ENCODE measurements at regions of chr11 and their contacts with region 1.

Region 1: DNA sequence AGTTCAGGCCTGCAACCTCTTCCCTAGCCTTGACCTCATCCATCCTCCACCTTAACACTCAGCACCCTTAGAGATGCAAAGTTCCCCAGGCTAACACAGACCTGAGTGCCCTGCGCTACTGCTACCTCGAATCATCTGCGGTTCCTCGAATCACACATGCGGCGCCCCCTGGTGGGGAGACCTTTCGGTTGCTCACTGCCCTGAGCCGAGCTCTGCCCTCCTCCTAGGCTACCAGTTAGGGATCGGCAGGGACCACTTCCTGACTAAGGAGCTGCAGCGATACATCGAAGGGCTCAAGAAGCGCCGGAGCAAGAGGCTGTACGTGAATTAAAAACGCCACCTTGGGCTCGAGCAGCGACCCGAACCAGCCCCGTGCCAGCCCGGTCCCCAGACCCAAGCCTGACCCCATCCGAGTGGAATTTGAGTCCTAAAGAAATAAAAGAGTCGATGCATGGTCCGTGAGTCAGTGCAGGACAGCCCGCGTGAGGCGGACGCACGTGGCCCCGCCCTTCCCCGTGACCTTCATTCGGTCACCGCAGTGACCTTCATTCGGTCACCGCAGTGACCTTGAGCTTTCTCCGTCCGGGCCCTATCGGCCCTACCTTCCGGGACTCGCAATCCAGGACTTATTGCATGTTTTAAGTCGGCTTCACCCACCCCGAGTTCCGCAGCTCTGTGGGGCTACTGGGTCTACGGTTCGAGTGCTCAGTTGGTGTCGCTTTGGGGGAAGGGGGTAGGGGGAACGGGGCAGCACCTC is 830 bp upstream of the ESRRA start:
- DNase-seq: peak; percentile 81
- H3K4me3 ChIP-seq: peak overlapping the region; percentile 32 to 63 (median 45)
- H3K27ac ChIP-seq: peak overlapping the region; percentile 46
- H3K4me1 ChIP-seq: peaks cover 34% of the 10 kb centered on the region
- H3K27me3 ChIP-seq: peaks cover 4% of the 10 kb centered on the region
- CTCF ChIP-seq: peak; percentile 79 to 88

Region 2: GRCh38 chr11:63838678-63839507 is 465.6 kb before region 1 on chr11 and contains the start of gene MARK2:
- CTCF ChIA-PET with region 1: interaction called, 5 read pairs
- dilution Hi-C with region 1: no loop called
- in situ Hi-C with region 1: no loop called
- intact Hi-C with region 1: loop called (anchors 10 kb)
- DNase-seq: peak; percentile 96
- H3K4me3 ChIP-seq: peak within 1 kb of the TSS; percentile 59 to 86 (median 86)
- H3K27ac ChIP-seq: peak within 1 kb of the TSS; percentile 58
- H3K4me1 ChIP-seq: peaks cover 31% of the 10 kb centered on the region
- H3K27me3 ChIP-seq: no peaks in the 10 kb centered on the region
- CTCF ChIP-seq: no peak
- total RNA-seq, gene MARK2: 26.7 to 64.4 TPM

Region 3: GRCh38 chr11:64036087-64037026 is 268.1 kb before region 1 on chr11:
- CTCF ChIA-PET with region 1: interaction called, 10 read pairs
- dilution Hi-C with region 1: no loop called
- in situ Hi-C with region 1: no loop called
- intact Hi-C with region 1: no loop called
- DNase-seq: peak; percentile 16
- H3K4me3 ChIP-seq: peak overlapping the region in 1 of 3 experiments; percentile 28
- H3K27ac ChIP-seq: no peak overlapping the region
- H3K4me1 ChIP-seq: peaks cover 4% of the 10 kb centered on the region
- H3K27me3 ChIP-seq: peaks cover 33% of the 10 kb centered on the region
- CTCF ChIP-seq: no peak

Region 4: GRCh38 chr11:64204464-64204989 is 100.0 kb before region 1 on chr11:
- CTCF ChIA-PET with region 1: interaction called, 9 read pairs
- dilution Hi-C with region 1: no loop called
- in situ Hi-C with region 1: loop called in 1 of 2 experiments (anchors 5 kb)
- intact Hi-C with region 1: loop called (anchors 1 kb)
- DNase-seq: peak; percentile 81
- H3K4me3 ChIP-seq: no peak overlapping the region
- H3K27ac ChIP-seq: no peak overlapping the region
- H3K4me1 ChIP-seq: peaks cover 5% of the 10 kb centered on the region
- H3K27me3 ChIP-seq: no peaks in the 10 kb centered on the region
- CTCF ChIP-seq: peak; percentile 80 to 91

Region 5: GRCh38 chr11:64246871-64247728 is 57.4 kb before region 1 on chr11 and contains the start of gene PPP1R14B:
- CTCF ChIA-PET with region 1: interaction called, 6 read pairs
- dilution Hi-C with region 1: no loop called
- in situ Hi-C with region 1: no loop called
- intact Hi-C with region 1: loop called (anchors 1 kb)
- DNase-seq: peak; percentile 81
- H3K4me3 ChIP-seq: peak within 1 kb of the TSS; percentile 79 to 84 (median 82)
- H3K27ac ChIP-seq: peak within 1 kb of the TSS; percentile 77
- H3K4me1 ChIP-seq: peaks cover 41% of the 10 kb centered on the region
- H3K27me3 ChIP-seq: no peaks in the 10 kb centered on the region
- CTCF ChIP-seq: peak in 1 of 2 donors; percentile 15
- total RNA-seq, gene PPP1R14B: 118 to 362 TPM

Region 6: DNA sequence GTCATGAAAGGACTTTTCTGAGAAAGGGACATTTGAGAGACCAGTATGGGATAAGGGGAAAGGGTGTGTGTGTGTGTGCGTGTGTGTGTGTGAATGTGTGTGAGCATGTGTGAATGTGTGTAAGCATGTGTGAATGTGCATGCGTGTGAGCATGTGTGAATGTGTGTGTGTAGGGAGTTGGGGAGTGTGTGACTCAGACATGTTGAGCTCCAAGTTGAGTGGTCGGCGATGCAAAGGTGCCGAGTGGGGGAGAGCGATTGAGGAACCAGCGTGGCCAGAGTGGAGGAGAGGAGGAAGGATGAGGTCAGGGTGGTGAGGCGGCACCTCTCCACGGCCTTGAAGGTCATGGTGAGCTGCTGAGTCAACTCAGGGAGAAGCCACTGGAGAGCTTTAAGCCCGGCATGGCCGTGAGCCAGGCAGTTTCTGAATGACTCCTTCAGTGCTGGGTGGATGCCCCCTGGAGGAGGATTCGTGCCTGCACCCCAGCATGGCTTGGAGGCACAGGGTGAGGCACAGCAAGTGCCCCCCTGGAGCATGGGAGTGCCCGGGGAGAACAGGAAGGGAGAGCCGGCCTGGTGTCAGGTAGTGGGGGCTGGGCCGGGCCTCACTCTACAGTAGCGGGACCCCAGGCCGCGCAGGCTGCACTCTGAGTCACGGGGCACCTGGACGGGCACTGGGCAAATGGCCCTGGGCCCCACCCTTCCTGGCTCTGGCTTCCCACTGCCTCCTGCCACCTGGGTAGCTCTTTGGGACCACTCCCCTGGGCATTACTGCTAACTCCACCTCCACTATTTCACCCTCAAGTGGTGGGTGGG is 27.3 kb after region 1 on chr11:
- CTCF ChIA-PET with region 1: interaction called, 4 read pairs
- dilution Hi-C with region 1: no loop called
- in situ Hi-C with region 1: no loop called
- intact Hi-C with region 1: loop called (anchors 1 kb)
- DNase-seq: peak; percentile 89
- H3K4me3 ChIP-seq: no peak overlapping the region
- H3K27ac ChIP-seq: peak overlapping the region; percentile 35
- H3K4me1 ChIP-seq: peaks cover 24% of the 10 kb centered on the region
- H3K27me3 ChIP-seq: no peaks in the 10 kb centered on the region
- CTCF ChIP-seq: peak; percentile 84 to 95

Region 7: GRCh38 chr11:64358907-64359711 is 54.6 kb after region 1 on chr11 and contains the start of gene RPS6KA4:
- CTCF ChIA-PET with region 1: no interaction called
- dilution Hi-C with region 1: no loop called
- in situ Hi-C with region 1: no loop called
- intact Hi-C with region 1: loop called (anchors 1 kb)
- DNase-seq: peak; percentile 71
- H3K4me3 ChIP-seq: peak within 1 kb of the TSS; percentile 61 to 97 (median 93)
- H3K27ac ChIP-seq: peak within 1 kb of the TSS; percentile 55
- H3K4me1 ChIP-seq: peaks cover 47% of the 10 kb centered on the region
- H3K27me3 ChIP-seq: no peaks in the 10 kb centered on the region
- CTCF ChIP-seq: no peak
- total RNA-seq, gene RPS6KA4: 45.0 to 92.1 TPM

Region 8: DNA sequence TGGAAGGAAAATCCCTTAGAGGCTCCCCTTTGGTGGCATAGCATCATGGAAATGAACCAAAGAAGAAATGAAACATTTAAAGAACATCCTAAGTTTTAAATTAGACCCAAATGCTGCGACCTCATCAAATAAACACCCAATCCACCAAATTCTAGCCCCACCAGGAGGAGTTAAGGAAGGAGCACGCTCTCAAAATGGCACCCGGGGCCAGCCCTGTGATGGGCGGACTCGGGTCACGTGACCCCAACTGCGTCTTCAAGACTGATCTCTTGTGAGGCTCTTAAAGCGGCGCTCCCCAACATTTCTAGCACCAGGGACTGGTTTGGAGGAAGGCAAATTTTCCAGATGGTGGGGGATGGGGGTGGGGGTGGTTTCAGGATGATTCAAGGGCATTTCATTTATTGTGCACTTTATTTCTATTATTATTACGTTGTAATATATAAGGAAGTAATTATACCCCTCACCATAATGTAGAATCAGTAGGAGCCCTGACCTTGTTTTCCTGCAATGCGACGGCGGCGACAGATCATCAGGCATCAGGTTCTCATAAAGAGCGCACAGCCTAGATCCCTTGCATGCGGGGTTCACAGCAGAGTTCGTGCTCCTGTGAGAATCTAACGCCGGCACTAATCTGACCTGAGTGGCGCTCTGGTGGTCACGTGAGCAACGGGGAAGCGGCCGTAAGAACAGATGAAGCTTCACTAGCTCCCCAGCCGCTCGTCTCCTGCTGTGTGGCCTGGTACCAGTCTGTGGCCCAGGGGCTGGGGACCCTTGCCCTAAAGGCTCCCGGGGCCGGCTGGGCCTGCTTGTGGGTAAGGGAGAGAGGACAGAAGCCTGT is 195.9 kb after region 1 on chr11:
- CTCF ChIA-PET with region 1: no interaction called
- dilution Hi-C with region 1: no loop called
- in situ Hi-C with region 1: no loop called
- intact Hi-C with region 1: no loop called
- DNase-seq: no peak
- H3K4me3 ChIP-seq: no peak overlapping the region
- H3K27ac ChIP-seq: no peak overlapping the region
- H3K4me1 ChIP-seq: peaks cover 4% of the 10 kb centered on the region
- H3K27me3 ChIP-seq: no peaks in the 10 kb centered on the region
- CTCF ChIP-seq: no peak